SK-N-SH (cell line): ENCODE measurements at regions of chr3 and their contacts with region 1.

Region 1: DNA sequence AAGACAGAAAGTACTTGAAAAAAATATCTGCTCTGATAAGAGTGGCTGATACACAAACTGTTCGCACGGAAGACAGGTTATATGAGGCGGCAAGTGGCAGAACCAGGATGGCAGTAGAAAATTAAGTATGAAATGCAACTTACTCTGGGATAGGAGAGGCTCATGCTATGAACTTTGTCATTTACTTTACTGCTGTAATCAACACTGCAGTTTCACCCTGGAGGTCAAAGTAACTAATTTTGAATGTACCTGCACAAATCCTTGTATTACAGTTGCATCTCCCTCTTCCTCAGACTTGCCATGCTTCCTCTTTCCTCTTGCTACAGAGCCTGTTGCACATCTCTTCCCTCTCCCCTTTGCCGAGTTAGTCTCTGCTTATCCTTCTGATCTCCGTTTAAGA is 38.8 kb downstream of the HACL1 start:
- DNase-seq: no peak
- H3K4me3 ChIP-seq: no peak overlapping the region
- H3K27ac ChIP-seq: no peak overlapping the region
- H3K4me1 ChIP-seq: no peaks in the 10 kb centered on the region
- H3K27me3 ChIP-seq: no peaks in the 10 kb centered on the region
- CTCF ChIP-seq: no peak
- EP300 ChIP-seq: no peak
- RAD21 ChIP-seq: no peak

Region 2: GRCh38 chr3:15405448-15406050 is 157.0 kb before region 1 on chr3:
- CTCF ChIA-PET with region 1: interaction called, 17 read pairs
- POLR2A ChIA-PET with region 1: no interaction called
- DNase-seq: peak; percentile 51
- H3K4me3 ChIP-seq: no peak overlapping the region; a peak in 1 of 4 replicates
- H3K27ac ChIP-seq: no peak overlapping the region
- H3K4me1 ChIP-seq: no peaks in the 10 kb centered on the region
- H3K27me3 ChIP-seq: no peaks in the 10 kb centered on the region
- CTCF ChIP-seq: peak; percentile 82
- EP300 ChIP-seq: no peak
- RAD21 ChIP-seq: peak; percentile 65